ENCODE measurements at regions of chr12 and their contacts with region 1.

Region 1: GRCh38 chr12:30806989-30807694 is 52.4 kb upstream of the CAPRIN2 start:
- DNase-seq: peak; percentile 78
- ATAC-seq: peak; percentile 97
- H3K4me3 ChIP-seq: peak overlapping the region in 1 of 2 experiments; percentile 29; a peak in 2 of 4 replicates
- H3K27ac ChIP-seq: peak overlapping the region; percentile 39
- H3K4me1 ChIP-seq: 0 out of 2 replicates have a peak, but pooled peaks cover 3% of the 10 kb centered on the region
- H3K27me3 ChIP-seq: no peaks in the 10 kb centered on the region
- CTCF ChIP-seq: peak; percentile 88

Region 2: GRCh38 chr12:29545102-29545467 is 1262.1 kb before region 1 on chr12:
- CTCF ChIA-PET with region 1: no interaction called
- POLR2A ChIA-PET with region 1: no interaction called
- in situ Hi-C with region 1: no loop called
- intact Hi-C with region 1: loop called (anchors 10 kb)
- DNase-seq: no peak
- ATAC-seq: no peak
- H3K4me3 ChIP-seq: no peak overlapping the region
- H3K27ac ChIP-seq: no peak overlapping the region
- H3K4me1 ChIP-seq: no peaks in the 10 kb centered on the region
- H3K27me3 ChIP-seq: peaks cover 6% of the 10 kb centered on the region; the same call in 1 of the 2 replicates
- CTCF ChIP-seq: no peak

Region 3: GRCh38 chr12:30243426-30243825 is 563.7 kb before region 1 on chr12:
- CTCF ChIA-PET with region 1: no interaction called
- POLR2A ChIA-PET with region 1: no interaction called
- in situ Hi-C with region 1: no loop called
- intact Hi-C with region 1: loop called (anchors 10 kb)
- DNase-seq: no peak
- ATAC-seq: no peak
- H3K4me3 ChIP-seq: no peak overlapping the region
- H3K27ac ChIP-seq: no peak overlapping the region
- H3K4me1 ChIP-seq: no peaks in the 10 kb centered on the region
- H3K27me3 ChIP-seq: no peaks in the 10 kb centered on the region
- CTCF ChIP-seq: no peak

Region 4: DNA sequence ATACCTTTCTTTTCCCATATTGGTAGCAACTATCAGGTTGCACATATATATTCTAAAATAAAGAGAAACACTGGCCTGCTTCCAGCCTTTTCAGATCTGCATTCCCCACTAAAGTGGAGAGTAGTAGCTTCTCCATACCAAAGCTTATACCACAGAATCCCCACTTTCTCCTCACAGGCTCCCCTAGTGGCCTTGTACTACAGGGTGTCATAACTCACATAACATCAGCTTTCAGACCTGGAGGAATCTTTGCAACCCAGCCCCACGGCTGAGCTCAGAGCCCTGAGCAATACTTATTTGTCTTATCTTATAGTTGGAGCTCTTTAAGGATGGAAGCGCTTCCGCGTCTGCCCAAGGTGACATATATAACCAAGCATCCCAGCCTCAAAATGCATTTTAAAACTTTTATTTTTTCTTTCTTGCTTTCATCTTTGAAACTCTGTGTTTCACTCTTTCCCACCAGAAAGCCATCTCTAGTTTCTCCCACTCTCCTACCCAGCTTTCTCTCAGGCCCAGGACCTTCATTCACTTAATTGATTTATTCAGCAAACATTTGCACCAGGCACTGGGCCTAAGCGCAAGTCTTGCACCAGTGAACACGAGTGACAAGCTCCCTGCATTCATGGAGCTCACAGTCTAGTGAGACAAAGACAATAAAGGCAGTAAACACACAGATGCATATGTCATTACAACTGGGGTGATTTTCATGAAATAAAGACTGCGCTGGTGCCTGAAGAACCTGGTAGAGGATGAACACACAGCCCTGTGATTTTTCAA is 366.1 kb before region 1 on chr12:
- CTCF ChIA-PET with region 1: no interaction called
- POLR2A ChIA-PET with region 1: no interaction called
- in situ Hi-C with region 1: no loop called
- intact Hi-C with region 1: no loop called
- DNase-seq: no peak
- ATAC-seq: peak; percentile 87; the same call in 1 of the 2 replicates
- H3K4me3 ChIP-seq: no peak overlapping the region
- H3K27ac ChIP-seq: no peak overlapping the region
- H3K4me1 ChIP-seq: no peaks in the 10 kb centered on the region
- H3K27me3 ChIP-seq: 0 out of 2 replicates have a peak, but pooled peaks cover 7% of the 10 kb centered on the region
- CTCF ChIP-seq: peak; percentile 76

Region 5: DNA sequence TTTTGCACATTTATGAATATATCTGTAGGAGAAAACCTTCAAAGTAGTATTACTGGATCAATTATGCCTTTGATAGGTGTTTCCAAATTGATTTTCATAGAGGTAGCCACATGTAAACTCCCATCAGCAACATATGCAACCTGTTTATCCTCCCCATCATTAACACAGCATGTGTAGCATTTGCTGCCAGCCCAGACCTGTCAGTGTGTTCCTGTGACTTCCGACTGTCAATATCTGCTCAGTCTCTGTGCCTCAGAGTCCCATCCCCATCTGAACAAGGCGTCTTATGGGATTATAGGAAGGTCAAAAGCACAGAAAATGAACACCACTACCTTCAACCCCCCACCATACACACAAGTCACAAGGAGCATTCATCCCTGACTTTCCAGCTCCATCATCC is 42.9 kb before region 1 on chr12:
- CTCF ChIA-PET with region 1: no interaction called
- POLR2A ChIA-PET with region 1: no interaction called
- in situ Hi-C with region 1: no loop called
- intact Hi-C with region 1: no loop called
- DNase-seq: no peak
- ATAC-seq: no peak
- H3K4me3 ChIP-seq: no peak overlapping the region
- H3K27ac ChIP-seq: no peak overlapping the region
- H3K4me1 ChIP-seq: no peaks in the 10 kb centered on the region
- H3K27me3 ChIP-seq: no peaks in the 10 kb centered on the region
- CTCF ChIP-seq: no peak

Region 6: DNA sequence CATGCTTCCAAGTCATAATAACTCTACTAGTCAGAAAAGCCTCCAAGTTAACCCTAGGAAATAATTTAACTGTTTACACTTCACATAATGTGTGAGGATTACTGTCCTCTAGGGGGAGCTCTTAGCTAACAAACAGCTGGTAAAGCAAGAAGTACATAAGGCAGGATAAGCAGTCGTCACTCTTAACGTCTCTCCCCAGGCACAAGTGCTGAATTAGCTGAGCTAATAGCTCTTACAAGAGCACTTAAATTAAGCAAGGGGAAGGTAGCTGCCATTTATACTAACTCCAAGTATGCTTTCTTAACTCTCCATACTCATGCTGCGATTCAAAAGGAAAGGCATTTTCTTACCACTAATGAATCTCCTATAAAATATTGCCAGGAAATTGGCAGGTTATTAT is 40.1 kb after region 1 on chr12:
- CTCF ChIA-PET with region 1: no interaction called
- POLR2A ChIA-PET with region 1: no interaction called
- in situ Hi-C with region 1: no loop called
- intact Hi-C with region 1: no loop called
- DNase-seq: peak; percentile 64
- ATAC-seq: peak; percentile 74
- H3K4me3 ChIP-seq: no peak overlapping the region
- H3K27ac ChIP-seq: no peak overlapping the region
- H3K4me1 ChIP-seq: no peaks in the 10 kb centered on the region
- H3K27me3 ChIP-seq: peaks cover 12% of the 10 kb centered on the region; the same call in 1 of the 2 replicates
- CTCF ChIP-seq: peak; percentile 85